ENCODE measurements at regions of chr1 and their contacts with region 1.

Region 1: DNA sequence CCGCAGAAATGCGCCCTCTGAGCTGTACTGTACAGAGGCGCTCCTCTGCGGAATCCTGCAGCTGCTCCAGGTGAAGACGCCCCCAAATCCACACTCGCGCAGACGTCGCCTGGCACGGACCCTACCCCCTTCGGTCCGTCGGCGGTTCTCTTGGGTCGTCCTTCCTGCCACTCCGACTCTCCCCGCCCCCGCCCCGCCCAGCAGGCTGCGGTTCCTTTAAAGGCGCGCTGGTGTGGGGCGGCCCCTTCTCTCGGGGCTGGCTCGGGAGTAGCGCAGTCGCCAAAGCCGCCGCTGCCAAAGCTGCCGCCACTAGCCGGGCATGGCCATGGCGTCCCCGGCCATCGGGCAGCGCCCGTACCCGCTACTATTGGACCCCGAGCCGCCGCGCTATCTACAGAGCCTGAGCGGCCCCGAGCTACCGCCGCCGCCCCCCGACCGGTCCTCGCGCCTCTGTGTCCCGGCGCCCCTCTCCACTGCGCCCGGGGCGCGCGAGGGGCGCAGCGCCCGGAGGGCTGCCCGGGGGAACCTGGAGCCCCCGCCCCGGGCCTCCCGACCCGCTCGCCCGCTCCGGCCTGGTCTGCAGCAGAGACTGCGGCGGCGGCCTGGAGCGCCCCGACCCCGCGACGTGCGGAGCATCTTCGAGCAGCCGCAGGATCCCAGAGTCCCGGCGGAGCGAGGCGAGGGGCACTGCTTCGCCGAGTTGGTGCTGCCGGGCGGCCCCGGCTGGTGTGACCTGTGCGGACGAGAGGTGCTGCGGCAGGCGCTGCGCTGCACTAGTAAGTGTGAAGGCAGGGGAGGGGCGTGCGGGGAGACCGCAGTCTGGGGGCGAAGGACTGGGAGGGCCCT is at the start of gene RASSF5:
- DNase-seq: peak; percentile 84
- ATAC-seq: peak; percentile 91
- H3K4me3 ChIP-seq: peak within 1 kb of the TSS; percentile 28 to 75 (median 64)
- H3K4me3 Mint-ChIP-seq: peak within 1 kb of the TSS; percentile 86
- H3K27ac ChIP-seq: no peak within 1 kb of the TSS
- H3K27ac Mint-ChIP-seq: peak within 1 kb of the TSS; percentile 10
- H3K4me1 ChIP-seq: peaks cover 19 to 21% of the 10 kb centered on the region in 2 donors
- H3K4me1 Mint-ChIP-seq: peaks cover 28% of the 10 kb centered on the region
- H3K27me3 ChIP-seq: peaks cover 0 to 50% (median 19%) of the 10 kb centered on the region in 4 experiments
- H3K27me3 Mint-ChIP-seq: peaks cover 32% of the 10 kb centered on the region
- CTCF ChIP-seq: no peak
- total RNA-seq, gene RASSF5: 144 and 146 TPM in 2 replicates

Region 2: GRCh38 chr1:206469933-206470691 is 37.4 kb before region 1 on chr1 and contains the start of gene IKBKE:
- CTCF ChIA-PET with region 1: interaction called, 4 read pairs
- POLR2A ChIA-PET with region 1: no interaction called
- intact Hi-C with region 1: loop called (anchors 5 kb)
- DNase-seq: peak; percentile 77
- ATAC-seq: peak; percentile 65
- H3K4me3 ChIP-seq: peak within 1 kb of the TSS; percentile 62 to 97 (median 85)
- H3K4me3 Mint-ChIP-seq: peak within 1 kb of the TSS; percentile 88
- H3K27ac ChIP-seq: peak within 1 kb of the TSS; percentile 63 to 75
- H3K27ac Mint-ChIP-seq: peak within 1 kb of the TSS; percentile 85
- H3K4me1 ChIP-seq: peaks cover 63 to 74% of the 10 kb centered on the region in 2 donors
- H3K4me1 Mint-ChIP-seq: peaks cover 73% of the 10 kb centered on the region
- H3K27me3 ChIP-seq: no peaks in the 10 kb centered on the region
- H3K27me3 Mint-ChIP-seq: no peaks in the 10 kb centered on the region
- CTCF ChIP-seq: peak; percentile 30
- total RNA-seq, gene IKBKE: 40.5 and 40.8 TPM in 2 replicates

Region 3: GRCh38 chr1:206496131-206496793 is 11.2 kb before region 1 on chr1:
- CTCF ChIA-PET with region 1: interaction called, 13 read pairs
- POLR2A ChIA-PET with region 1: interaction called, 4 read pairs
- intact Hi-C with region 1: no loop called
- DNase-seq: peak; percentile 46
- ATAC-seq: peak; percentile 44
- H3K4me3 ChIP-seq: peak overlapping the region in 1 of 5 experiments; percentile 3
- H3K4me3 Mint-ChIP-seq: peak overlapping the region; percentile 68
- H3K27ac ChIP-seq: peak overlapping the region; percentile 28 to 67
- H3K27ac Mint-ChIP-seq: peak overlapping the region; percentile 83
- H3K4me1 ChIP-seq: peaks cover 32 to 37% of the 10 kb centered on the region in 2 donors
- H3K4me1 Mint-ChIP-seq: peaks cover 43% of the 10 kb centered on the region
- H3K27me3 ChIP-seq: no peaks in the 10 kb centered on the region
- H3K27me3 Mint-ChIP-seq: no peaks in the 10 kb centered on the region
- CTCF ChIP-seq: no peak

Region 4: GRCh38 chr1:206517784-206518183 is 10.3 kb after region 1 on chr1:
- CTCF ChIA-PET with region 1: interaction called, 3 read pairs
- POLR2A ChIA-PET with region 1: interaction called, 3 read pairs
- intact Hi-C with region 1: loop called (anchors 1 kb)
- DNase-seq: no peak
- ATAC-seq: no peak
- H3K4me3 ChIP-seq: no peak overlapping the region
- H3K4me3 Mint-ChIP-seq: no peak overlapping the region
- H3K27ac ChIP-seq: no peak overlapping the region
- H3K27ac Mint-ChIP-seq: no peak overlapping the region
- H3K4me1 ChIP-seq: peaks cover 10 to 12% of the 10 kb centered on the region in 2 donors
- H3K4me1 Mint-ChIP-seq: peaks cover 6% of the 10 kb centered on the region
- H3K27me3 ChIP-seq: peaks cover 0 to 7% (median 2%) of the 10 kb centered on the region in 4 experiments
- H3K27me3 Mint-ChIP-seq: no peaks in the 10 kb centered on the region
- CTCF ChIP-seq: no peak

Region 5: DNA sequence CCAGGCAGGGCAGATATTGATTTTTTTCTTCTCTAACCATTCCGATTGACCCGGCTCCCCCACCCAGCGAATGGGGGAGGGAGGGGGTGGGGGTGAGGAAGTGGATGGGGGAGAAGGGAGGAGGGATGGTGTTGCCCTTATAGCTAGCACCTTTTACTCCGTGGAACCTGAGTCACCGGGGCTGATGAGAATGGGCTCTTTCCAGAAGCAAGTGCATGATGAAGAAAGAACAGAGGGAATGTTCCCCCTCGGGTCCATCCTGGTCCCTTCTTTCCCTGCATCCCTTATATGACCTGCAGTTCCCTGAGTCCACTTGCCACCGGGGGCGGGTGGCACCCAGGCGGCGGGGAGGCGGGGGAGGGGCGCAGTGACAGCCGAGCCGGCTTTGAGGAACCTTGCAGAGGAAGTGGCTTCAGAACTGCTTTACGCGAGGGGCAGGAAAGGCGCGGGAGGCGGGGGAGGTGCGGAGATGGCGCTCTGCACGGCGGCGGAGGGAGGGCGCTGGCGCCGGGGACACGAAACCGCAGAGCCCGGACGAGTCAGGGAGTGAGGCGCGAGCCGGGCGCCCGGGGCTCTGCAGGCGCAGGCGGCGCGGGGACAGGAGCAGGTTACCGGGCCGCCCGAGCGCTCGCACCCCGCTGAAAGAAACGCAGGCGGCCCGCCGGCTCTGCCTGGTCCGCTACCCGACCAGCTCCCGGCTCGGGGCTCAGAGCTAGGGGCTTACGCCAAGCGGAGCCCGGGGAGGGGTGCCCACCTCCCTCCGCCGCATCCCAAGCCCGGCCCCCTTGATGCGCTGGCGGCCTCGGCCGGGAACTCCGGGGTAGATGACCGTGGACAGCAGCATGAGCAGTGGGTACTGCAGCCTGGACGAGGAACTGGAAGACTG is 49.5 kb after region 1 on chr1:
- CTCF ChIA-PET with region 1: interaction called, 3 read pairs
- POLR2A ChIA-PET with region 1: no interaction called
- intact Hi-C with region 1: loop called (anchors 2 kb)
- DNase-seq: peak; percentile 89
- ATAC-seq: peak; percentile 79
- H3K4me3 ChIP-seq: peak overlapping the region; percentile 85 to 100 (median 97)
- H3K4me3 Mint-ChIP-seq: peak overlapping the region; percentile 99
- H3K27ac ChIP-seq: peak overlapping the region; percentile 86 to 95
- H3K27ac Mint-ChIP-seq: peak overlapping the region; percentile 99
- H3K4me1 ChIP-seq: peaks cover 46 to 69% of the 10 kb centered on the region in 2 donors
- H3K4me1 Mint-ChIP-seq: peaks cover 67% of the 10 kb centered on the region
- H3K27me3 ChIP-seq: no peaks in the 10 kb centered on the region
- H3K27me3 Mint-ChIP-seq: no peaks in the 10 kb centered on the region
- CTCF ChIP-seq: no peak

Region 6: GRCh38 chr1:206631085-206631509 is 123.6 kb after region 1 on chr1:
- CTCF ChIA-PET with region 1: no interaction called
- POLR2A ChIA-PET with region 1: no interaction called
- intact Hi-C with region 1: no loop called
- DNase-seq: peak; percentile 69
- ATAC-seq: no peak
- H3K4me3 ChIP-seq: no peak overlapping the region
- H3K4me3 Mint-ChIP-seq: no peak overlapping the region
- H3K27ac ChIP-seq: no peak overlapping the region
- H3K27ac Mint-ChIP-seq: no peak overlapping the region
- H3K4me1 ChIP-seq: peaks cover 14 to 15% of the 10 kb centered on the region in 2 donors
- H3K4me1 Mint-ChIP-seq: peaks cover 19% of the 10 kb centered on the region
- H3K27me3 ChIP-seq: peaks cover 0 to 9% (median 4%) of the 10 kb centered on the region in 4 experiments
- H3K27me3 Mint-ChIP-seq: peaks cover 4% of the 10 kb centered on the region
- CTCF ChIP-seq: peak; percentile 43

Measured in B cell (primary cell).